Transverse colon (tissue), 4 donors: ENCODE measurements at regions of chr12 and their contacts with region 1.

Region 1: GRCh38 chr12:6062757-6063735 is 61.4 kb downstream of the VWF start:
- DNase-seq: peak; percentile 58
- H3K4me3 ChIP-seq: no peak overlapping the region
- H3K27ac ChIP-seq: no peak overlapping the region
- H3K4me1 ChIP-seq: no peaks in the 10 kb centered on the region
- H3K27me3 ChIP-seq: no peaks in the 10 kb centered on the region
- CTCF ChIP-seq: peak; percentile 90 to 96 (median 93)
- EP300 ChIP-seq: no peak
- POLR2A ChIP-seq: no peak

Region 2: DNA sequence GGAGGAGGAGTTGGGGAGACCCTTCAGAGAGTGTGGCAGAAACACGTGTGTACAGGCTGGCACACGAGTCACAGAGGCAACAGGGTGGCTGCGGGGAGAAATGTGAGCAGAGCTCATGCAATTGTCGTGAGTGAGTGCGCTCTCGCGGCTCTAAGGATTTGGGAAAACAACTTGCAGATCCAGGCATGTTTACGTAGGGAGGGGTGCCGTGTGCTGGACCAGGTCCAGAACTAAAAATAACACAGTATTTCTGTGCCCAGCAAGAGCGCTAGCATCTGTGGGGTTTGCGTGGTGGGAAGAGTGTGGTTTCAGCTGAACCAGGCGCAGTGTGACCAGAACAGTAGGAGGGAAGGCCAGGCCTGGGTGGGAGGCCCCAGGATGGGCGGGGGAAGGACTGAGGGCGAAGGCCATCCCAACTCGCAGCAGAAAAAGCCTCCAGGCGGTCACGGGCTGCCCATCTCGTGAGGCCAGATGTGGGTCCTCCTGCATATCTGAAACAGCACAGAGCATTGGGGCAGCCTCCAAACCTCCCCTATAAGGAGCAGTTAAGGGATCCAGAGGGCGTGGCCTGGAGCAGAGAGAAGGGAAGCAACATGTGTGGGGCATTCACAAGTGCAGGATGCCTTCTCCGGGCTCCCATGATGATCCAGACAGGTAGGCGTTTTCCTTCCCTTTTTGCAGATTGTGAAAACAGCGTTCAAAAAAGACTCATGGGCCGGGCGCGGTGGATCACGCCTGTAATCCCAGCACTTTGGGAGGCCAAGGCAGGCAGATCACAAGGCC is 119.3 kb after region 1 on chr12:
- in situ Hi-C with region 1: loop called in 3 of 4 experiments (anchors 10 to 25 kb)
- intact Hi-C with region 1: loop called (anchors 5 kb)
- DNase-seq: peak; percentile 64
- H3K4me3 ChIP-seq: peak overlapping the region in 1 of 4 donors; percentile 3
- H3K27ac ChIP-seq: peak overlapping the region; percentile 70 to 84 (median 82)
- H3K4me1 ChIP-seq: peaks cover 32 to 50% (median 36%) of the 10 kb centered on the region in 4 donors
- H3K27me3 ChIP-seq: no peaks in the 10 kb centered on the region
- CTCF ChIP-seq: no peak
- EP300 ChIP-seq: no peak
- POLR2A ChIP-seq: peak; percentile 25

Region 3: DNA sequence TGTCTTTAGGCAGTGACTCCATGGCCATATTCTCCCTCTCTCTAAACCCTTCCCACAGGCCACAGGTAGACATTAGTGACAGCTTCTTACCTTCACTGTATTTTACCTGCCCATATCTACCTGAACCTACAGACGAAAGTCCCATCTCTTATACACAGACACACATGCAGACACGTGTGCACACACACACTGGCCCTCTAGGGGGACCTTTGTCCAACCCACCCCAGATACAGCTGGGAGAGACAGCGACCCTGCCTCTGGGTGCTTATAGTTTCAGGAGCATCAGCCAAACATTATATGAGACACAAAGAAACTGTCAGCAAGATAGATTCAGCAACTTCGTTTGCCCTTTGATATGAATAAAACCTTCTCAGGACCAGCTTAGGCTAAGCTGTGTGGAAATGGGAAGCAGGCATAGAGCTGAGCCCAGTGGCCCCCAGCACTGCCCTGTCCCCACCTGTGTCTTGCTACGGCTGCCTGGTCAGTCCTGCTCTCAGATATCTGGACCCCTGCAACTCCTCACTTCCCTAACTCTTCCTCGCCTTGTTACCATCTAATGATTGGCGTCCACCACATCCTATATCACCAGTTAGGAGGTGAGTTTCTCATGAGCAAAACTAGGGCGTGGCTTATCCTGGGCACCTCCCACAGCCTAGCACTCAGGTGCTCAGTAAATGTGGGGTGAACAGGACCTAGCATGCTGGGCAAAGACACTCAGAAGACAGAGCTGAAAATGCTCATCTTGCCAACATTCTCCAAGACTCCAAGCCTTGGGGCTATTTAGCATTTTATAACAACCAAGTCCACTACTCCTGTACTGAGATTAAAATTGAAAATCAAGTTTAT is 125.1 kb after region 1 on chr12:
- in situ Hi-C with region 1: loop called in 3 of 4 experiments (anchors 10 to 25 kb)
- intact Hi-C with region 1: loop called (anchors 5 kb)
- DNase-seq: no peak
- H3K4me3 ChIP-seq: no peak overlapping the region
- H3K27ac ChIP-seq: peak overlapping the region in 1 of 4 donors; percentile 44
- H3K4me1 ChIP-seq: peaks cover 9 to 18% (median 10%) of the 10 kb centered on the region in 4 donors
- H3K27me3 ChIP-seq: no peaks in the 10 kb centered on the region
- CTCF ChIP-seq: no peak
- EP300 ChIP-seq: no peak
- POLR2A ChIP-seq: no peak

Region 4: GRCh38 chr12:6195665-6196535 is 132.9 kb after region 1 on chr12:
- in situ Hi-C with region 1: loop called in 2 of 4 experiments (anchors 10 to 25 kb)
- intact Hi-C with region 1: no loop called
- DNase-seq: peak; percentile 92
- H3K4me3 ChIP-seq: no peak overlapping the region
- H3K27ac ChIP-seq: peak overlapping the region; percentile 93 to 99 (median 95)
- H3K4me1 ChIP-seq: peaks cover 11 to 40% (median 36%) of the 10 kb centered on the region in 4 donors
- H3K27me3 ChIP-seq: no peaks in the 10 kb centered on the region
- CTCF ChIP-seq: peak; percentile 89 to 99 (median 93)
- EP300 ChIP-seq: peak; percentile 69
- POLR2A ChIP-seq: no peak

Region 5: DNA sequence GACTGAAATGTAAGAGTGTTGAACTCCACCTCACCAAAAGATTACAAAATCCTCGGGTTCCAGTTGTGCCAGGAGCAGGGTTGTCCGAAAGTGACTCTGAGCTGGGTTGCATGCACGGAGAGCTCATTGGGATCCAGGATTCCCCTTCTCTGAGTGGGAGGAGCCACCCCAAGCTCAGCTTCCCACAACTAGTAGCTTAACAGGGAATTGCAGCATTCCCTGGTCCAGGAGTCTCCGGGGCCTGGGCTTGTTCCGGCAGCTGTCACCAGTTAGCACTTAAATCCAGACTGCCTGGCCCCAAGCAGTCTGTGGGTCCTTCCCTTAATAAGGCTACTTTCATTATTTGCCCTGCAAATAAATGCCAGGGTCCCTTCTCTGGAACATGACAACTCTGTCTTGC is 187.3 kb after region 1 on chr12:
- in situ Hi-C with region 1: loop called in 1 of 4 experiments (anchors 10 kb)
- intact Hi-C with region 1: no loop called
- DNase-seq: no peak
- H3K4me3 ChIP-seq: no peak overlapping the region
- H3K27ac ChIP-seq: no peak overlapping the region
- H3K4me1 ChIP-seq: no peaks in the 10 kb centered on the region
- H3K27me3 ChIP-seq: no peaks in the 10 kb centered on the region
- CTCF ChIP-seq: no peak
- EP300 ChIP-seq: no peak
- POLR2A ChIP-seq: no peak

Region 6: GRCh38 chr12:6278439-6279255 is 215.6 kb after region 1 on chr12:
- in situ Hi-C with region 1: loop called in 3 of 4 experiments (anchors 5 to 10 kb)
- intact Hi-C with region 1: no loop called
- DNase-seq: peak; percentile 94
- H3K4me3 ChIP-seq: peak overlapping the region; percentile 36 to 52 (median 42)
- H3K27ac ChIP-seq: peak overlapping the region; percentile 91 to 95 (median 92)
- H3K4me1 ChIP-seq: peaks cover 26 to 35% (median 31%) of the 10 kb centered on the region in 4 donors
- H3K27me3 ChIP-seq: no peaks in the 10 kb centered on the region
- CTCF ChIP-seq: peak; percentile 60 to 95 (median 84)
- EP300 ChIP-seq: peak; percentile 80
- POLR2A ChIP-seq: peak; percentile 70

Region 7: GRCh38 chr12:6285063-6285477 is 222.0 kb after region 1 on chr12:
- in situ Hi-C with region 1: loop called (anchors 5 to 10 kb)
- intact Hi-C with region 1: loop called (anchors 2 kb)
- DNase-seq: peak; percentile 71
- H3K4me3 ChIP-seq: no peak overlapping the region
- H3K27ac ChIP-seq: no peak overlapping the region
- H3K4me1 ChIP-seq: peaks cover 5 to 22% (median 6%) of the 10 kb centered on the region in 4 donors
- H3K27me3 ChIP-seq: no peaks in the 10 kb centered on the region
- CTCF ChIP-seq: peak; percentile 91 to 96 (median 92)
- EP300 ChIP-seq: no peak
- POLR2A ChIP-seq: no peak

Region 8: GRCh38 chr12:6965026-6965661 is 902.1 kb after region 1 on chr12:
- in situ Hi-C with region 1: no loop called
- intact Hi-C with region 1: no loop called
- DNase-seq: peak; percentile 95
- H3K4me3 ChIP-seq: peak overlapping the region in 2 of 4 donors; percentile 54 to 62
- H3K27ac ChIP-seq: peak overlapping the region; percentile 89 to 95 (median 94)
- H3K4me1 ChIP-seq: peaks cover 34 to 71% (median 57%) of the 10 kb centered on the region in 4 donors
- H3K27me3 ChIP-seq: no peaks in the 10 kb centered on the region
- CTCF ChIP-seq: peak; percentile 81 to 98 (median 91)
- EP300 ChIP-seq: no peak
- POLR2A ChIP-seq: peak; percentile 59